HepG2 (cell line): ENCODE measurements at regions of chr22 and their contacts with region 1.

Region 1: DNA sequence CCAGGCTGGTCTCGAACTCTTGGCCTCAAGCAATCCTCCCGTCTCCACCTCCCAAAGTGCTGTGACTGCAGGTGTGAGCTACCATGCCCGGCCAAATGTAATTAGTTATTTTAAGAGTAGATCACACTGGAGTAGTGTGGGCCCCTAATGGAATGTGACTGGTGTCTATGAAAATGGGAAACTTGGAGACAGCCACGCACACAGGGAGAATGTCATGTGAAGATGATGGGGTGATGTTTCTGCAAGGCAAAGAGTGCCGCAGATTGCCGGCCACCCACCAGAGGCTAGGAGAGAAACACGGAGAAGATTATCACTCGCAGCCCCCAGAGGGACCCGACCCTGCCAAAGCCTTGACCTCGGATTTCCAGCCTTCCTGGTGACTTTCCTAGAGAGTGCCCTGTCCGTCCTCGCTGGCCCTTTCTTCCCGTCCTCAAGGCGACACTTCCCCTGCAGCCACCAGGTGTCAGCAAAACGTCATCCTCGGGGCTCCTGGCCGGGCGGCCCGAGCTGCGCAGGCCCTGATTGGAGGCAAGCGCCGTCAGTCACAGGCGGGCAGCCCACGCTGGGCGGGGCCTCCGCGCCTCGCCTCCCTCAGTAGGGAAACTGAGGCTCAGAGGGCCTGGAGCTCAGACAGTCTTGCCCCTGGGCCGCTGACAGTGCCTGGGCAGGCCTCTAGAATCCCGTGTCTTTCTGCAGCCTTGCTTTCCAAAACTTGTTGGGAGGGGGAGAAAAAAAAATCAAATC is 16.3 kb downstream of the CRYBB2 start:
- DNase-seq: peak; percentile 71
- ATAC-seq: peak; percentile 98
- H3K4me3 ChIP-seq: peak overlapping the region in 1 of 3 experiments; percentile 49; a peak in 1 of 6 replicates
- H3K27ac ChIP-seq: no peak overlapping the region
- H3K4me1 ChIP-seq: peaks cover 5% of the 10 kb centered on the region; the same call in 1 of the 2 replicates
- H3K27me3 ChIP-seq: peaks cover 2 to 19% of the 10 kb centered on the region in 2 experiments; a peak in 1 of 5 replicates
- CTCF ChIP-seq: peak; percentile 99
- EP300 ChIP-seq: no peak
- POLR2A ChIP-seq: no peak
- RAD21 ChIP-seq: peak; percentile 95

Region 2: GRCh38 chr22:25091458-25091857 is 144.3 kb before region 1 on chr22:
- CTCF ChIA-PET with region 1: no interaction called
- POLR2A ChIA-PET with region 1: no interaction called
- in situ Hi-C with region 1: no loop called
- intact Hi-C with region 1: no loop called
- DNase-seq: no peak
- ATAC-seq: no peak
- H3K4me3 ChIP-seq: no peak overlapping the region
- H3K27ac ChIP-seq: no peak overlapping the region
- H3K4me1 ChIP-seq: peaks cover 14% of the 10 kb centered on the region
- H3K27me3 ChIP-seq: no peaks in the 10 kb centered on the region
- CTCF ChIP-seq: no peak
- EP300 ChIP-seq: no peak
- POLR2A ChIP-seq: no peak
- RAD21 ChIP-seq: no peak

Region 3: GRCh38 chr22:25318081-25318823 is 82.5 kb after region 1 on chr22:
- CTCF ChIA-PET with region 1: no interaction called
- POLR2A ChIA-PET with region 1: no interaction called
- in situ Hi-C with region 1: no loop called
- intact Hi-C with region 1: loop called (anchors 5 kb)
- DNase-seq: no peak
- ATAC-seq: peak; percentile 48
- H3K4me3 ChIP-seq: no peak overlapping the region
- H3K27ac ChIP-seq: no peak overlapping the region
- H3K4me1 ChIP-seq: no peaks in the 10 kb centered on the region
- H3K27me3 ChIP-seq: 0 out of 5 replicates have a peak, but pooled peaks cover 1 to 3% of the 10 kb centered on the region in 2 experiments
- CTCF ChIP-seq: no peak
- EP300 ChIP-seq: no peak
- POLR2A ChIP-seq: no peak
- RAD21 ChIP-seq: no peak

Region 4: GRCh38 chr22:25334162-25334490 is 98.4 kb after region 1 on chr22:
- CTCF ChIA-PET with region 1: interaction called, 14 read pairs
- POLR2A ChIA-PET with region 1: no interaction called
- in situ Hi-C with region 1: loop called (anchors 5 kb)
- intact Hi-C with region 1: loop called (anchors 2 kb)
- DNase-seq: peak; percentile 49
- ATAC-seq: peak; percentile 92
- H3K4me3 ChIP-seq: no peak overlapping the region
- H3K27ac ChIP-seq: no peak overlapping the region
- H3K4me1 ChIP-seq: peaks cover 18% of the 10 kb centered on the region
- H3K27me3 ChIP-seq: no peaks in the 10 kb centered on the region; a peak in 1 of 5 replicates
- CTCF ChIP-seq: peak; percentile 88
- EP300 ChIP-seq: no peak
- POLR2A ChIP-seq: no peak
- RAD21 ChIP-seq: peak; percentile 48; the same call in 1 of the 2 replicates